ENCODE measurements at regions of chr7 and their contacts with region 1.

Region 1: GRCh38 chr7:136405931-136406777 is 429.0 kb upstream of the MTPN start:
- DNase-seq: peak; percentile 15
- ATAC-seq: peak; percentile 80
- H3K4me3 ChIP-seq: no peak overlapping the region
- H3K27ac ChIP-seq: no peak overlapping the region
- H3K4me1 ChIP-seq: no peaks in the 10 kb centered on the region
- H3K27me3 ChIP-seq: no peaks in the 10 kb centered on the region
- CTCF ChIP-seq: peak; percentile 21 to 71 (median 59); a peak in 4 of 6 replicates
- POLR2A ChIP-seq: no peak
- RAD21 ChIP-seq: peak; percentile 42

Region 2: DNA sequence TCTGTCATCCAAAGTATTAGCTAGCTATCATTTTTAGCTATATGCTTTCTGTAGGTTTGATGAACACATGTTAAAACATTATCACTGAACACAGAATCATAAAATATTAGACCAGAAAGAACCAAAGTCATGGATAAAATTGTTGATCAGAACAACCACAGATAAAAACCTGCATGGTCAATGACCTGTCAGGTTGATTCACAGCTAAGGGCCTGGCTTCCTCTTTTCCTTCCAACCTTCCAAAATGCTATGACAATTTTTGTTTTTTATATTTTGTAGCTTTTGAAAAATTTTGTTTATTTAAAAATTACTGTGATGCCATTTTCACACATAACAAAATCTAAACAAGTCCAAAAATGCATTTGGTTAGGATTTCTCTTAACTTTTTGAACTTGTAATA is 17.9 kb after region 1 on chr7:
- CTCF ChIA-PET with region 1: no interaction called
- POLR2A ChIA-PET with region 1: no interaction called
- RAD21 ChIA-PET with region 1: no interaction called
- intact Hi-C with region 1: no loop called
- DNase-seq: no peak
- ATAC-seq: no peak
- H3K4me3 ChIP-seq: no peak overlapping the region
- H3K27ac ChIP-seq: no peak overlapping the region
- H3K4me1 ChIP-seq: no peaks in the 10 kb centered on the region
- H3K27me3 ChIP-seq: no peaks in the 10 kb centered on the region
- CTCF ChIP-seq: no peak
- POLR2A ChIP-seq: no peak
- RAD21 ChIP-seq: no peak

Region 3: GRCh38 chr7:137454246-137454724 is 1048.1 kb after region 1 on chr7:
- CTCF ChIA-PET with region 1: no interaction called
- POLR2A ChIA-PET with region 1: no interaction called
- RAD21 ChIA-PET with region 1: no interaction called
- intact Hi-C with region 1: loop called (anchors 5 kb)
- DNase-seq: no peak
- ATAC-seq: 0 out of 2 replicates have a peak, but pooled peaks have one; percentile 46
- H3K4me3 ChIP-seq: no peak overlapping the region
- H3K27ac ChIP-seq: no peak overlapping the region
- H3K4me1 ChIP-seq: no peaks in the 10 kb centered on the region
- H3K27me3 ChIP-seq: no peaks in the 10 kb centered on the region
- CTCF ChIP-seq: peak; percentile 23 to 70 (median 53); a peak in 5 of 6 replicates
- POLR2A ChIP-seq: no peak
- RAD21 ChIP-seq: peak; percentile 58

Region 4: DNA sequence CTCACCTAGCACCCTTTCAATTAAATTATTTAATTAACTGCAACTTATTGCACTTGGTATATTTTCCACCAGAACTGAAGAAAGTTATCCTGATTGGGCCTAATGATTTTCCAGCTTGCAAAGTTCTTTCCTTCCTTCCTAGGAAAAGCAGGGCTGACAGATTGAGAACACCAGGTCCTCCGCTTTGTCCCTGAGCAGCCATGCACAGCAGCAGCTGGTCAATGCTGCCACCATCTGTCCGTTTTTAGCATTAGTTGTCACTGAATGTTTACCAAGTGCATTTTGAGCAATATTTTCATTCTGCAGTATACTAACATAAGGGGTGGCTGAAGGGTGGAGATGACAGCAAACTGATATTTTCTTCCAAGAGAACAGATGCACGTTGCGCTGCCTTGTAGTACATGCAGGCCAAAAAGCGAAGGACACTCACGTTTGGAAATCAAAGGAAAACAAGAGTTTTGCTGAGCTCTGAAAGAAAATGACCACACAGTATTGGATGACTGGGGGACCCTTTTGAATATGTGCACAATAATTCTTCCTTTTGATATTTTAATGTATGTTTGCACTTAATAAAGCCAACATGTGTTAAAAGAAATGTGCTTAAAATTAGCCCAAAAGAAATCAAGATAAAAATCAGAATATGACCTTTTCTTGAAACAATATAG is 1186.2 kb after region 1 on chr7:
- CTCF ChIA-PET with region 1: no interaction called
- POLR2A ChIA-PET with region 1: no interaction called
- RAD21 ChIA-PET with region 1: no interaction called
- intact Hi-C with region 1: loop called (anchors 2 kb)
- DNase-seq: peak; percentile 22
- ATAC-seq: peak; percentile 92
- H3K4me3 ChIP-seq: no peak overlapping the region
- H3K27ac ChIP-seq: no peak overlapping the region
- H3K4me1 ChIP-seq: peaks cover 0 to 6% of the 10 kb centered on the region in 2 experiments; a peak in 1 of 4 replicates
- H3K27me3 ChIP-seq: 0 out of 2 replicates have a peak, but pooled peaks cover 6% of the 10 kb centered on the region
- CTCF ChIP-seq: peak; percentile 62 to 80 (median 65); a peak in 5 of 6 replicates
- POLR2A ChIP-seq: no peak
- RAD21 ChIP-seq: peak; percentile 86

Measured in HCT116 (cell line).